ENCODE measurements at regions of chr13 and their contacts with region 1.

Region 1: DNA sequence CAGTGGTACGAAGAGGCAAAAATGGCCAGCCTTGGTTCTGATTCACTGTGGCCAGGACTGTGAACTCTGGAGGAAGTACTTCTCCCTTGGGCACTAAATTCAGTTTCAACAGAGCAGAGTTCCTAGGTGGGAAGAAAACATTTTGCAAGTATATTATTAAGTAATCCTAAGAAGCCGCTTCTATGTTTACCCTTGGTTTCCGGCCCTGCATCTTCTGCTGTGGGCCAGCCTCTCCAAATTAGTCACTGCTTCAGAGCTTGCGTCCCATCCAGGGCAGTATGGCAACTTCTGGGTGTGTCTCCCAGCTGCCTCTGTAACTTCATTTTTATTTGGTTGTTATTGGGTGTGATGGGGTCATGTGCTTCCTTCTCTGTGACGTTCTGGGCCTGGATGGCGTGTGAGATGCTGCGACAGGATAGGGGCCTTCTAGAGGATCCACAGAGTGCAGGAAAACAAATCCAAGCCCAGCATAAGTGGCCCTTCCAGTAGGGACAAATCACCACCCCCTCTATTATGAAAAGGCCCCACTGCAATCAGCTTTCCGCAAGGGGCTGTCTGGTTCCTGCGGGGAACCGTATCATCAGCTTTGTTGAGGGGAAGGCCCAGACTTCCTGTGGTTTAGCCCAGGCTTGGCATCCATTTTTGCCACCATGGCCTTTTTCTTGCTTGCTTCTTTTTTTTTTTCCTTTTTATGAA is 55.1 kb upstream of the C1QTNF9 start:
- DNase-seq: no peak
- ATAC-seq: peak in 7 of 8 donors; percentile 28 to 74 (median 54)
- H3K4me3 ChIP-seq: peak overlapping the region in 1 of 10 donors; percentile 53
- H3K27ac ChIP-seq: peak overlapping the region in 1 of 10 donors; percentile 81
- H3K4me1 ChIP-seq: peaks cover 0 to 56% (median 0%) of the 10 kb centered on the region in 9 donors
- H3K27me3 ChIP-seq: no peaks in the 10 kb centered on the region
- CTCF ChIP-seq: no peak

Region 2: DNA sequence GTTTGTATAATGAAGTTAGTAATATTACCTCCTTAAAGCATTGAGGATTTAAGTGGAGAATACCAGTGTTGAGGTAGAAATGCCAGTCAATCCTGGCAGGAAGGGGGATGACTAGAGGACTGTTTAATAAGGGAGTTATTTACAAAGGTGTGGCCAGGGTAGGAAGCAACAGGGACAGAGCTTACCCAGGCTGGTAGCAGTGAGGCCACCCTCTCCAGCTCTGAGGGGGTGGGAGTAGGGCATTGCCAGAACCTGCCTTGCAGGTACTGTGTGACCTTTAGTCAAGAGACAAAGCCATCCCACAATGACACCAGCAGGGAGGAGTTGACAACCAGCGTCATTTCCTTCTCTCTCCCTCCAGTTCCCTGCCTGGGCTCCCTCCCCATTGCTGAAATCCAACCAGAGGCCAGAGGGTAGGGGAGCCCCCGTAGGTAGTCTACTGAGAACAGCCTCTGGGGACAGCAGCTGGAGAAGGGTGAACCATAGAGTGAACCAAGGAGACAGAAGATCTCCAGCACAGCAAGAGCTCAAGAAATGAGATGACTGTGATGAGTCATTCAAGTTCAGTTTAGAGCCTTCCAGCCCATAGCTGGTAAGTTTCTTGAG is 127.2 kb before region 1 on chr13:
- intact Hi-C with region 1: loop called in 1 of 10 experiments (anchors 5 kb)
- DNase-seq: no peak
- ATAC-seq: no peak
- H3K4me3 ChIP-seq: no peak overlapping the region
- H3K27ac ChIP-seq: no peak overlapping the region
- H3K4me1 ChIP-seq: peaks cover 0 to 33% (median 15%) of the 10 kb centered on the region in 9 donors
- H3K27me3 ChIP-seq: peaks cover 0 to 9% (median 3%) of the 10 kb centered on the region in 7 donors
- CTCF ChIP-seq: no peak

Region 3: GRCh38 chr13:24207841-24208667 is 46.2 kb before region 1 on chr13:
- intact Hi-C with region 1: no loop called
- DNase-seq: no peak
- ATAC-seq: peak in 6 of 8 donors; percentile 28 to 85 (median 60)
- H3K4me3 ChIP-seq: no peak overlapping the region
- H3K27ac ChIP-seq: peak overlapping the region in 1 of 10 donors; percentile 13
- H3K4me1 ChIP-seq: peaks cover 0 to 32% (median 21%) of the 10 kb centered on the region in 9 donors
- H3K27me3 ChIP-seq: no peaks in the 10 kb centered on the region
- CTCF ChIP-seq: no peak

Region 4: DNA sequence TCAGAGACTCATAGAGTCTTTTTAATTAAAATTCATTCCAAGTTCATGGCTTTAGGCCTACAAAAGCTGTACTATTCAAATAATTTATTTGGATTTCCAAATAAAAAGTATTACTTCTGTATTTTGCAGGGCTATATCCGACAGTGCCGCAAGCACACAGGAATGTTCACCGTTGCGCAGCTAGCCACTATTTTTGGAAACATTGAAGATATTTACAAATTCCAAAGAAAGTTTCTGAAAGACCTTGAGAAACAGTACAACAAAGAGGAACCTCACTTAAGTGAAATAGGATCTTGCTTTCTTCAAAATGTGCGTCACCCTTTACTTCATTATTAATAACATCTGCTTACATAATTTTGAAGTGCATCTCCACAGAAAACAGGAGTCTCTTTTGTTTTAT is 34.6 kb after region 1 on chr13:
- intact Hi-C with region 1: no loop called
- DNase-seq: no peak
- ATAC-seq: no peak
- H3K4me3 ChIP-seq: no peak overlapping the region
- H3K27ac ChIP-seq: no peak overlapping the region
- H3K4me1 ChIP-seq: peaks cover 0 to 5% (median 0%) of the 10 kb centered on the region in 9 donors
- H3K27me3 ChIP-seq: no peaks in the 10 kb centered on the region
- CTCF ChIP-seq: no peak

Region 5: GRCh38 chr13:24407844-24408243 is 153.6 kb after region 1 on chr13:
- intact Hi-C with region 1: loop called in 1 of 10 experiments (anchors 10 kb)
- DNase-seq: no peak
- ATAC-seq: no peak
- H3K4me3 ChIP-seq: no peak overlapping the region
- H3K27ac ChIP-seq: no peak overlapping the region
- H3K4me1 ChIP-seq: no peaks in the 10 kb centered on the region
- H3K27me3 ChIP-seq: peaks cover 0 to 8% (median 0%) of the 10 kb centered on the region in 7 donors
- CTCF ChIP-seq: no peak